Mammary epithelial cell (primary cell): ENCODE measurements at regions of chr5 and their contacts with region 1.

Region 1: GRCh38 chr5:87277279-87277835 is 9.7 kb downstream of the RASA1 start:
- DNase-seq: no peak
- H3K4me3 ChIP-seq: no peak overlapping the region
- H3K27ac ChIP-seq: no peak overlapping the region
- H3K4me1 ChIP-seq: peaks cover 10% of the 10 kb centered on the region
- H3K27me3 ChIP-seq: no peaks in the 10 kb centered on the region
- CTCF ChIP-seq: no peak

Region 2: DNA sequence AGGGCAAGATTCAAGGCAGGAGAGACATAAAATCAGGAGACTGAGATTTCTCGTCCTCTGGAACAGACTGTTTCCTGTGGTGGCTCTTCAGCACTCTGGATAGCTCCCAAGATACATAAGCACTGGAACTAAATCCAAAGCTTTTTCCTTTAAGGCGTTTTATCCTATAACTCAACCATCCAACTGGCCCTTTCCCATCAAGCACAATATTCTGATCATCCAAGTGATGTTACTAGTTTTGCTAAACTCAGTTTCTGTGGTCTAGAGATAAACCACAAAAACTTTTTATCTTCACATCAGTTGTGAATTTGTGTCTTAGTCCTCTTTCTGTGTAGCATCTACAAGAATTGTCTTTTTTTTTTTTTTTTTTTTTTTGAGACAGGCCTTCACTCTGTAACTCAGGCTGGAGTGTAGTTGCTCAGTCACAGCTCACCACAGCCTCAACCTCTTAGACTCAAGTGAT is 360.2 kb before region 1 on chr5:
- CTCF ChIA-PET with region 1: no interaction called
- dilution Hi-C with region 1: no loop called
- in situ Hi-C with region 1: no loop called
- intact Hi-C with region 1: no loop called
- DNase-seq: peak; percentile 6
- H3K4me3 ChIP-seq: no peak overlapping the region
- H3K27ac ChIP-seq: no peak overlapping the region
- H3K4me1 ChIP-seq: no peaks in the 10 kb centered on the region
- H3K27me3 ChIP-seq: no peaks in the 10 kb centered on the region
- CTCF ChIP-seq: no peak

Region 3: GRCh38 chr5:87340716-87341115 is 63.4 kb after region 1 on chr5:
- CTCF ChIA-PET with region 1: no interaction called
- dilution Hi-C with region 1: no loop called
- in situ Hi-C with region 1: no loop called
- intact Hi-C with region 1: loop called (anchors 10 kb)
- DNase-seq: no peak
- H3K4me3 ChIP-seq: no peak overlapping the region
- H3K27ac ChIP-seq: no peak overlapping the region
- H3K4me1 ChIP-seq: no peaks in the 10 kb centered on the region
- H3K27me3 ChIP-seq: no peaks in the 10 kb centered on the region
- CTCF ChIP-seq: no peak